ENCODE measurements at regions of chr2 and their contacts with region 1.

Region 1: DNA sequence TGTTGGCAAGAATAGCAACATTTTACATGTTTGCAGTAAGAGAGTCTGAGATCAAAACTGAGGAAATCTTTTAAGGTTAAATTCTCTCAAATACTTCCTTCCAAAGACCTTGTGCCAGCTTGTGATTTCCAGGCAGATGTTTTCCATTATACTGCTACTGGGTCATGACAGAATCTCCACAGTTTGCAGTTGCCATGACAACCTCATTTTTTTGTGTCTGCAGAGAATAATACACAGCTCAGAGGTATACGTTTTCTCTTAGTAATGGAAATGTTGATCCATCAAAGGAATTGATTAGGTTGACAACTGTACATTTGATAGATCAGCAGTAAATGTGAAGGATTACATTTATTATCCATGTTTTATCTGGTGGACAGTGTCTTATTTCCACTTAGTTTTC is 29.1 kb upstream of the CSRNP3 start:
- DNase-seq: no peak
- ATAC-seq: no peak
- H3K4me3 ChIP-seq: no peak overlapping the region
- H3K27ac ChIP-seq: no peak overlapping the region
- H3K4me1 ChIP-seq: no peaks in the 10 kb centered on the region
- H3K27me3 ChIP-seq: no peaks in the 10 kb centered on the region
- CTCF ChIP-seq: no peak
- EP300 ChIP-seq: no peak
- POLR2A ChIP-seq: no peak
- RAD21 ChIP-seq: no peak

Region 2: DNA sequence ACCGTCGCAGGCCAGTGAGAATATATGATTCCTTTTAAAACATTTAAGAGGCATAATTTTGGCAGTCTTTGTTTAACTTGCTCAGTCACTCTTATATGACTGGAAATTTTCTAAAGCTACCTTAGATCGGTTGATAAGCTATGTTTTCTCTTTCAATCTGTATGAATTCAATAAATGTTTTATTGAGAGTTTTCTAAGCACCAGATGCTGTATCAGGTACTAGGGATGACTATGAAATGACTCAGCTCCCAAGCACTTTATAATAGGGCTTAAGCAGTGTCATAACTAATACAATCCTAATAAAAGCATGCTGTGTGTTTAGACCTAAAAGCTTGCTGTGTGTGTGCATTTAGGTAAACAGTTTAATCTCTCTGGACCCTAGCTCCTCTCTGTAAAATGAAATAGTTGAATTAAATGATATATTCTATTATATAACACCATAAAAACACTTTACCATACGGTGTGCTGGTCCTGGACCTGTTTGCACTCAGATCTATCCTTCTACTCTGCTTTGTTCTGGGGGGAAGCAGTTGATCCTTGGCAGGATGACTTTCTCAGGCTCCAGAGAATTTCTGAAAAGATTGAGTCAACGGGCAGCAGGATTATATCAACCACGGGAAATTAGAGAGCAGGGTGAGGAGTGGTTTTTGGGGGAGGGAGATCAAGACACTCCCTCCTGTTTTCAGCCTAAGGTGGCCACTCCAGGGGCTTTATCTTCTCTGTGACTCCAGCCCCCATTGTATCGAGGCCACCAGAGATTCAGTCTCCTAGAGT is 459.0 kb before region 1 on chr2:
- CTCF ChIA-PET with region 1: no interaction called
- POLR2A ChIA-PET with region 1: no interaction called
- RAD21 ChIA-PET with region 1: no interaction called
- SMC1A ChIA-PET with region 1: no interaction called
- in situ Hi-C with region 1: no loop called
- intact Hi-C with region 1: no loop called
- DNase-seq: no peak
- ATAC-seq: no peak
- H3K4me3 ChIP-seq: no peak overlapping the region
- H3K27ac ChIP-seq: no peak overlapping the region
- H3K4me1 ChIP-seq: no peaks in the 10 kb centered on the region
- H3K27me3 ChIP-seq: no peaks in the 10 kb centered on the region
- CTCF ChIP-seq: no peak
- EP300 ChIP-seq: no peak
- POLR2A ChIP-seq: no peak
- RAD21 ChIP-seq: no peak

Region 3: GRCh38 chr2:165274698-165275097 is 165.7 kb before region 1 on chr2:
- CTCF ChIA-PET with region 1: no interaction called
- POLR2A ChIA-PET with region 1: no interaction called
- RAD21 ChIA-PET with region 1: no interaction called
- SMC1A ChIA-PET with region 1: no interaction called
- in situ Hi-C with region 1: no loop called
- intact Hi-C with region 1: no loop called
- DNase-seq: no peak
- ATAC-seq: peak; percentile 69
- H3K4me3 ChIP-seq: no peak overlapping the region
- H3K27ac ChIP-seq: no peak overlapping the region
- H3K4me1 ChIP-seq: no peaks in the 10 kb centered on the region
- H3K27me3 ChIP-seq: no peaks in the 10 kb centered on the region
- CTCF ChIP-seq: no peak
- EP300 ChIP-seq: no peak
- POLR2A ChIP-seq: no peak
- RAD21 ChIP-seq: no peak

Region 4: DNA sequence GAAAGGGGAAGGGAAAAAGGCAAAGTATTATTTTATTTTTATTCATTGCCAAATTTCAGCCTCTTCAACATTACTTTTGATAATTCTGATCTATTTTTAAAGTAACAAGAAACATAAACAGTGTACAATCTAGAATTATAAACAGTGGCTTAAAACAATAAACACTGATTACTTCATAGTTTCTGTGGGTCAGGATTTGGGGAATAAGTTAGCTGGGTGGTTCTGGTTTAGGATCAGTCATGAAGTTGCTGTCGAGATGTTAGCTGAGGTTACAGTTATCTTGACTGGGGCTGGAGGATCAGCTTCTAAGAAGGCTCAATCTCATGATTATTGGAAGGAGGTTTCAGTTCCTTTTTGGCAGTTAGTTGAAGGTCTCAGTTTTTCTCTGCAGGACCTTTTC is 91.9 kb before region 1 on chr2:
- CTCF ChIA-PET with region 1: no interaction called
- POLR2A ChIA-PET with region 1: no interaction called
- RAD21 ChIA-PET with region 1: no interaction called
- SMC1A ChIA-PET with region 1: no interaction called
- in situ Hi-C with region 1: no loop called
- intact Hi-C with region 1: no loop called
- DNase-seq: no peak
- ATAC-seq: no peak; the same call in 2 of the 3 replicates
- H3K4me3 ChIP-seq: no peak overlapping the region
- H3K27ac ChIP-seq: no peak overlapping the region
- H3K4me1 ChIP-seq: no peaks in the 10 kb centered on the region
- H3K27me3 ChIP-seq: no peaks in the 10 kb centered on the region
- CTCF ChIP-seq: no peak
- EP300 ChIP-seq: no peak
- POLR2A ChIP-seq: no peak
- RAD21 ChIP-seq: no peak

Region 5: DNA sequence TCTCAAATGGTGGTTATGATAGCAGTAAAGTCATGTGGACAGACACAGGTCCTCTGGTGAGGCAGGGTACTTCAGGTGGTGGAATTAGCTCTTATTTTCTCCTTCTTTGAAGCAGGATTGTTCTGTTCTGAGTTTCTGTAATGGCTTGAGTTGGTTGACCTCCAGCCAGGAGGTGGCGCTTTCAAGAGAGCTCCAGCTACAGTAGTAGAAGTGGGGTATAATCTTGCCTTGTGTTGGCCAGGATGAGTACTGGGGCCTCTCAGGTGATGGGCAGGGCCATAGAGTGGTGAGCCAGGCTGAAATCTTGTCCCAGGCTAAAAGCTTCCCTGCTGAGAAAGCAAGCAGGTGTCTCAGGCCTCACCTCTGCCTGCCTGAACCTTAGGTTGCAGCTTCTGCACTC is 23.4 kb before region 1 on chr2:
- CTCF ChIA-PET with region 1: interaction called, 5 read pairs
- POLR2A ChIA-PET with region 1: no interaction called
- RAD21 ChIA-PET with region 1: no interaction called
- SMC1A ChIA-PET with region 1: interaction called, 13 read pairs
- in situ Hi-C with region 1: no loop called
- intact Hi-C with region 1: no loop called
- DNase-seq: no peak
- ATAC-seq: peak; percentile 28; the same call in 2 of the 3 replicates
- H3K4me3 ChIP-seq: no peak overlapping the region
- H3K27ac ChIP-seq: no peak overlapping the region
- H3K4me1 ChIP-seq: no peaks in the 10 kb centered on the region
- H3K27me3 ChIP-seq: no peaks in the 10 kb centered on the region
- CTCF ChIP-seq: no peak
- EP300 ChIP-seq: no peak
- POLR2A ChIP-seq: no peak
- RAD21 ChIP-seq: no peak

Region 6: DNA sequence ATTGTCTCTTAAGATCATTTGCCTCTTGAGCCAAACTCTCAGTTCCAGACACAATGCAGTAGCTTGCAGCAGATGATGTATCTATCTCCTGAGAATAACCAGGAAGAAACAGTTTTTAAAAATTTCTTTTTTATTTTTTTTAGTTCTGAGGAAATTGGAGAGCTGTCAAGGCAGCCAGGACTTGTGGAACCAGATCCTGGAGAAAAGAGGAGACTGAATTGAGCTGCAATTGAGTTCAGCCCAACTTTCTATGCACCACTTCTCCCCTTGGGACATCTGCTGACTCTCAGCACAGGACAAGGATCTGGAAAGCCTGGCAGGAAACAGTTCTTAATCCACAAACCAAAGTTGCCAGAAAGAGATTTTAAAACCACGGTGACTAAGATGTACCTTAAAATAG is 15.7 kb after region 1 on chr2:
- CTCF ChIA-PET with region 1: interaction called, 26 read pairs
- POLR2A ChIA-PET with region 1: interaction called, 3 read pairs
- RAD21 ChIA-PET with region 1: interaction called, 5 read pairs
- SMC1A ChIA-PET with region 1: interaction called, 107 read pairs
- in situ Hi-C with region 1: no loop called
- intact Hi-C with region 1: no loop called
- DNase-seq: no peak
- ATAC-seq: no peak
- H3K4me3 ChIP-seq: no peak overlapping the region
- H3K27ac ChIP-seq: no peak overlapping the region
- H3K4me1 ChIP-seq: no peaks in the 10 kb centered on the region
- H3K27me3 ChIP-seq: no peaks in the 10 kb centered on the region
- CTCF ChIP-seq: no peak
- EP300 ChIP-seq: no peak
- POLR2A ChIP-seq: no peak
- RAD21 ChIP-seq: no peak

Region 7: GRCh38 chr2:165499131-165499530 is 58.8 kb after region 1 on chr2:
- CTCF ChIA-PET with region 1: no interaction called
- POLR2A ChIA-PET with region 1: interaction called, 4 read pairs
- RAD21 ChIA-PET with region 1: interaction called, 3 read pairs
- SMC1A ChIA-PET with region 1: interaction called, 13 read pairs
- in situ Hi-C with region 1: no loop called
- intact Hi-C with region 1: no loop called
- DNase-seq: no peak
- ATAC-seq: no peak
- H3K4me3 ChIP-seq: no peak overlapping the region
- H3K27ac ChIP-seq: no peak overlapping the region
- H3K4me1 ChIP-seq: no peaks in the 10 kb centered on the region
- H3K27me3 ChIP-seq: no peaks in the 10 kb centered on the region
- CTCF ChIP-seq: no peak
- EP300 ChIP-seq: no peak
- POLR2A ChIP-seq: no peak
- RAD21 ChIP-seq: no peak